H1 (cell line): ENCODE measurements at regions of chr1 and their contacts with region 1.

Region 1: DNA sequence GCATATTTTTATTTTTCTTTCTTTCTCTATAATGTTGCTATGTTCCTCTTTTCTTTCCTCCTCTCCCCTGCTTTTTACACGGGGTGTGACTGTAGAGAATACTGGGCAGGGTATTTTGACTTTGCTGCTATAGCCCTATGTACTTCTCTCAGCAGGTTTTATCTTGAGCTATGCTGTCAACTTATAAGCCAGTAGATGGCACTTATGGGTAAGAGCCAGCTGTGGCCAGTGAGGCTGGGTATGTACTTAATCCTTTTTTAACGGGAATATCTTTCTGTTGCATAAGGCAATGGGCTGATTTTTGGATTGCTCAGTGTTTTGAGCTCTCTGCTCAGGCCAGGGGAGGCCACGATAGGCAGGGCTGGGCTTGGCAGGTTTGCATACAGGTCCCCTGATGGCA is 99.0 kb downstream of the KCNK2 start:
- DNase-seq: no peak
- H3K4me3 ChIP-seq: no peak overlapping the region
- H3K27ac ChIP-seq: no peak overlapping the region
- H3K4me1 ChIP-seq: no peaks in the 10 kb centered on the region
- H3K27me3 ChIP-seq: no peaks in the 10 kb centered on the region
- CTCF ChIP-seq: peak in 2 of 3 experiments; percentile 30 to 39; a peak in 2 of 4 replicates
- EP300 ChIP-seq: no peak
- POLR2A ChIP-seq: no peak
- RAD21 ChIP-seq: peak; percentile 46 to 60

Region 2: GRCh38 chr1:215114154-215114933 is 67.2 kb before region 1 on chr1:
- CTCF ChIA-PET with region 1: no interaction called
- POLR2A ChIA-PET with region 1: no interaction called
- DNase-seq: no peak
- H3K4me3 ChIP-seq: no peak overlapping the region
- H3K27ac ChIP-seq: no peak overlapping the region
- H3K4me1 ChIP-seq: no peaks in the 10 kb centered on the region
- H3K27me3 ChIP-seq: no peaks in the 10 kb centered on the region
- CTCF ChIP-seq: no peak
- EP300 ChIP-seq: no peak
- POLR2A ChIP-seq: no peak
- RAD21 ChIP-seq: no peak

Region 3: GRCh38 chr1:215160351-215160750 is 21.2 kb before region 1 on chr1:
- CTCF ChIA-PET with region 1: no interaction called
- POLR2A ChIA-PET with region 1: no interaction called
- DNase-seq: no peak
- H3K4me3 ChIP-seq: no peak overlapping the region
- H3K27ac ChIP-seq: no peak overlapping the region
- H3K4me1 ChIP-seq: no peaks in the 10 kb centered on the region
- H3K27me3 ChIP-seq: no peaks in the 10 kb centered on the region
- CTCF ChIP-seq: no peak
- EP300 ChIP-seq: no peak
- POLR2A ChIP-seq: no peak
- RAD21 ChIP-seq: no peak

Region 4: GRCh38 chr1:215192306-215192705 is 10.8 kb after region 1 on chr1:
- CTCF ChIA-PET with region 1: interaction called, 11 read pairs
- POLR2A ChIA-PET with region 1: interaction called, 3 read pairs
- DNase-seq: no peak
- H3K4me3 ChIP-seq: no peak overlapping the region
- H3K27ac ChIP-seq: no peak overlapping the region
- H3K4me1 ChIP-seq: no peaks in the 10 kb centered on the region
- H3K27me3 ChIP-seq: no peaks in the 10 kb centered on the region
- CTCF ChIP-seq: no peak
- EP300 ChIP-seq: no peak
- POLR2A ChIP-seq: no peak
- RAD21 ChIP-seq: no peak

Region 5: GRCh38 chr1:215210167-215210566 is 28.6 kb after region 1 on chr1:
- CTCF ChIA-PET with region 1: no interaction called
- POLR2A ChIA-PET with region 1: no interaction called
- DNase-seq: no peak
- H3K4me3 ChIP-seq: no peak overlapping the region
- H3K27ac ChIP-seq: no peak overlapping the region
- H3K4me1 ChIP-seq: peaks cover 0 to 6% (median 0%) of the 10 kb centered on the region in 4 experiments; a peak in 2 of 7 replicates
- H3K27me3 ChIP-seq: no peaks in the 10 kb centered on the region
- CTCF ChIP-seq: no peak
- EP300 ChIP-seq: no peak
- POLR2A ChIP-seq: no peak
- RAD21 ChIP-seq: no peak